Activated CD4-positive, alpha-beta T cell treated with anti-CD3 and anti-CD28 coated beads for 36 hours (primary cell): ENCODE measurements at regions of chr2 and their contacts with region 1.

Region 1: DNA sequence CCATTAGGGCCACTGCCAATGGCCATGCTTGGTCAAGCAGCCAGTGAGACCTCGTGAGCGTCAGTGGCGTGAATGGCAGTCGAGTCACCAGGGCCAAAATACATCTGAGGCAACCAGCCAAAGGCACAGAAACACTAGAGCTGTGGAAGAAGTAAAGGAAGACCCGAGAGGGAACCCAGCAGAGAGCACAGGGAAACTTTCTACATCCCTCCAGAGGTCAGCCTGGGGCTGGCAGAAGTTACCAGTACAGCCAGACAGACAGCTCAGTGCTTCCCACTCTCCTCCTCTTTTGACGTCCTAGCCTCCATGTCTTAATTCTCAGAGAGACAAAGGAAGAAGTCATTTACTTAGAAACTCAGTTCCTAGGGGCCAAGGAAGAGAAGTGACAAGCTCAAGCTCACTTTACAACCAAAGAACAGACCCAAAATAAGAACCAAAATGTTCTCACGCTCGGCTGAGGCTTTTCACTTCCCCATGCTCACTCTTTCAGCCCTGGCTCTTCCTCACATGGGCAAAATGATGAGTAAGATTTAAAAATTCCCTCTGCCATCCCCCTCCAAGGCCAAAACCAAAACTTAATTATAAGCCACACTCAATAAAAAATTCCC is 8.7 kb downstream of the CYRIA start:
- DNase-seq: no peak
- ATAC-seq: no peak
- H3K4me3 Mint-ChIP-seq: no peak overlapping the region
- H3K27ac Mint-ChIP-seq: no peak overlapping the region
- H3K4me1 Mint-ChIP-seq: no peaks in the 10 kb centered on the region
- H3K27me3 Mint-ChIP-seq: peaks cover 6% of the 10 kb centered on the region

Region 2: GRCh38 chr2:16625201-16625729 is 31.6 kb before region 1 on chr2:
- CTCF ChIA-PET with region 1: interaction called, 12 read pairs
- POLR2A ChIA-PET with region 1: no interaction called
- intact Hi-C with region 1: no loop called
- DNase-seq: no peak
- ATAC-seq: no peak
- H3K4me3 Mint-ChIP-seq: no peak overlapping the region
- H3K27ac Mint-ChIP-seq: peak overlapping the region; percentile 48
- H3K4me1 Mint-ChIP-seq: peaks cover 50% of the 10 kb centered on the region
- H3K27me3 Mint-ChIP-seq: no peaks in the 10 kb centered on the region